Heart left ventricle (tissue), 16 donors: ENCODE measurements at regions of chr5 and their contacts with region 1.

Region 1: GRCh38 chr5:160021831-160022446 is 13.0 kb downstream of the TTC1 start:
- DNase-seq: peak in 2 of 5 donors; percentile 51 to 56
- ATAC-seq: peak; percentile 73 to 90 (median 84)
- H3K4me3 ChIP-seq: no peak overlapping the region
- H3K27ac ChIP-seq: peak overlapping the region in 1 of 12 donors; percentile 30
- H3K4me1 ChIP-seq: peaks cover 0 to 31% (median 4%) of the 10 kb centered on the region in 12 donors
- H3K27me3 ChIP-seq: no peaks in the 10 kb centered on the region
- CTCF ChIP-seq: peak; percentile 71 to 91 (median 82)
- POLR2A ChIP-seq: no peak

Region 2: GRCh38 chr5:160075073-160075472 is 53.1 kb after region 1 on chr5:
- intact Hi-C with region 1: loop called in 1 of 10 experiments (anchors 5 kb)
- DNase-seq: no peak
- ATAC-seq: no peak
- H3K4me3 ChIP-seq: no peak overlapping the region
- H3K27ac ChIP-seq: no peak overlapping the region
- H3K4me1 ChIP-seq: peaks cover 0 to 18% (median 12%) of the 10 kb centered on the region in 12 donors
- H3K27me3 ChIP-seq: no peaks in the 10 kb centered on the region
- CTCF ChIP-seq: no peak
- POLR2A ChIP-seq: no peak

Region 3: DNA sequence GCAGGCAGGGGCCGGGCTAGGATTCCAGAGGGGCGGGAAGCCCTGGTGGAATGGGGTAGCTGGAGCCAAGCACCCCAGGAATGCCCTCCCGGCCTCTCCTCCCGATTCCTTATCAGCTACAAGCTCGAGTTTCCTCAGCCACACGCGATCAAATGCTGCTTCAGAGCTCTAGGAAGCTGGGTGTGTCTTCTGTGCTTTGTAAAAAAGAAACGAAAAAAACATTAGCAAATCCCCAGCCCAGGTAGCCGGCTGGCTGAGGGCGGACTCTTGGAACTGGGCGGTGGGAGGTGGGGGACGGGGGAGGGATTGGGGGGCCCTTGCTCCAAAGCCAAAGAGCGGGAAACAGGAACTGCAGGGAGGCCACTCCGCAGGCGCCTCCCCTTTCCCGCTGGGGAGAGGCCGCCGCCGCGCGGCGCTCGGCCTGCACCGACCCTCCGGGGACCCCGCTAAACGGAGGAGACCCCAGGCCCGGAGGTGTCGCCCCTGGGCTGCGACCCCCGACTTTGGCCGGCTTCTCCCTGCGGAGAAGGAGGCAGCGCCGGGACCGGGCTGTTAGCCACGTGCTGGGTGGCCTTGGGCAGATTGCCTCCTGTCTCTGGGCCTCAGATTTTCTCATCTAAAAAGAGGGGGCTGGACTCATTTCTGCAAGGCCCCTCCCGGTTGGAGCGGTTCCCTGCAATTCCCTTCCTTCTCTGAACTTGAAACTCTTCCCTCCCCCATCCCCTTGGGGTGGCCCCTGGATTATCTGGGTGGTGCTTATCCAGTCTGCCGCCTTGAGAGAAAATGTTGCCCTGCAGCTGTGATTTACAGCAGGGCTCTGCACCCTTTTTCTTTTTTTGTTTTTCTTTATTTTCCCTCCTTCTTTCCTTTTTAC is 166.4 kb after region 1 on chr5:
- intact Hi-C with region 1: loop called in 3 of 10 experiments (anchors 10 kb)
- DNase-seq: peak; percentile 60 to 80 (median 63)
- ATAC-seq: peak; percentile 42 to 81 (median 72)
- H3K4me3 ChIP-seq: peak overlapping the region; percentile 27 to 67 (median 58)
- H3K27ac ChIP-seq: peak overlapping the region; percentile 24 to 80 (median 64)
- H3K4me1 ChIP-seq: peaks cover 0 to 14% (median 5%) of the 10 kb centered on the region in 12 donors
- H3K27me3 ChIP-seq: no peaks in the 10 kb centered on the region
- CTCF ChIP-seq: peak in 4 of 12 donors; percentile 14 to 40 (median 32)
- POLR2A ChIP-seq: no peak

Region 4: DNA sequence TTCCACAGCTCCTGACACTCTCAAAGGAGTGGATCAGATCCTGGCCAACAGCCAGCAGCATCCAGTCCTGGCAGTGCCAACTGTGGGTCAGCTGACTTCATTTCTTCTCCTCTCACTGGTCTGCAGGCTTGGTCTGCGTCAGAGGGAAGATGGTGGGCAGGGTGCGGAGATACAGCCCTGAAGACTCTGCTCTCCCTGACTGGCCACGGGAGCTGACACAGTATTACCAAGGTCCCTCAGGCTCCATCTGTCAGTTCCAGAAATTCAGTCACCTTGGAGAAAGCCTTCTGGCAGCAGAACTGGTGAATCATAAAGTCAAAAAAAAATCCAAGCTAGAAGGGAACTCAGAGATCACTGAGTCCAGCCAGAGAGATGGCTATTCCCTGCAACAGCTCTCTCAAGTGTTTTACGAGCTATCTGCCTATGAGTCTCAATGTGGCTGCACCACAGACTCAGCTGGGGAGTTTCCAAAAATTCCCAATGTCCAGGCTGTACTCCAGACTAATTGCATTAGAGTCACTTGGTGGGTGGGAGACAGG is 320.5 kb after region 1 on chr5:
- intact Hi-C with region 1: loop called (anchors 1 to 5 kb)
- DNase-seq: no peak
- ATAC-seq: peak in 2 of 4 donors; percentile 20 to 25
- H3K4me3 ChIP-seq: no peak overlapping the region
- H3K27ac ChIP-seq: no peak overlapping the region
- H3K4me1 ChIP-seq: peaks cover 0 to 13% (median 0%) of the 10 kb centered on the region in 12 donors
- H3K27me3 ChIP-seq: no peaks in the 10 kb centered on the region
- CTCF ChIP-seq: no peak
- POLR2A ChIP-seq: no peak

Region 5: DNA sequence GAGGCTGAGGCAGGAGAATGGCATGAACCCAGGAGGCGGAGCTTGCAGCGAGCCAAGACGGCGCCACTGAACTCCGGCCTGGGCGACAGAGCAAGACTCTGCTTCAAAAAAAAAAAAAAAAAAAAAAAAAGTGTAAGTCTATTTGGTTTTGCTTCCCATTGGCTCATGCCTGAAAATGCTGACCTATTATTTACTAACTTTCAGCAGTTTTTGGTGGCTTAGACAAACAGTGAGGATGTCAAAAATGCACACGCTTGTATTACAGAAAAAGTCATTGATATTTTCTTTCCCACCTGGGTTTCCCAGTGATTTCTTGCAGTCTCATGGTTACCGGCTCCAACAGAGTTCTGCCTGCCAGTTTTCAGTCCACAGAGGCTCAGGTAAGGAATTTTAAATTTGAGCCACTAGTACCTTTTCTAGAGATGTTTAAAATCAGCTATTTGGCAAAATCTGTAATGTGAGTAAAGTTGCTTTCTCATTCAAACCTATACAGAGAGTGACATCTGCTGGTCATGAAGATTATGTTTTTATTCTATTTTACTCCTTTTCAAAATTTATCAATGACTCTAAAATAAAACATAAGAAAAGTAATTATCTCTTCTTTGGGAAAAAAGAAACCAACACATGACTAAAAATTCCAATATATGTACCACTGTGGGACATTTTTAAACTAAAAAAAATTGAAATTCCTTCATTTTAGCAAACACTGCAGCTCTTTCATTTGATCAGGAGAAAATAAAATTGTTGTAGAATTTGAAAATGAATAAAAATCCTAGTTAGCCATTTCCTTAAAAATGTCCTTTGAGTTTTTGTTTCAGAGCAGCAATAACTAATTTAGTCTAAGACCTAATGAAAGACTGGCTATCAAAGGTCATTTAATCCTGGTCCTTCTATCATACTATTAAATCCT is 369.1 kb after region 1 on chr5:
- intact Hi-C with region 1: loop called in 9 of 10 experiments (anchors 5 to 10 kb)
- DNase-seq: no peak
- ATAC-seq: peak in 1 of 4 donors; percentile 30
- H3K4me3 ChIP-seq: no peak overlapping the region
- H3K27ac ChIP-seq: no peak overlapping the region
- H3K4me1 ChIP-seq: peaks cover 0 to 14% (median 0%) of the 10 kb centered on the region in 12 donors
- H3K27me3 ChIP-seq: no peaks in the 10 kb centered on the region
- CTCF ChIP-seq: peak; percentile 31 to 67 (median 53)
- POLR2A ChIP-seq: no peak